Panc1 (cell line): ENCODE measurements at regions of chr4 and their contacts with region 1.

Region 1: GRCh38 chr4:153573881-153574802 is 108.0 kb downstream of the TMEM131L start:
- DNase-seq: peak; percentile 25
- ATAC-seq: peak; percentile 88
- H3K4me3 ChIP-seq: no peak overlapping the region
- H3K27ac ChIP-seq: no peak overlapping the region
- H3K4me1 ChIP-seq: no peaks in the 10 kb centered on the region
- H3K27me3 ChIP-seq: no peaks in the 10 kb centered on the region
- CTCF ChIP-seq: peak; percentile 68

Region 2: DNA sequence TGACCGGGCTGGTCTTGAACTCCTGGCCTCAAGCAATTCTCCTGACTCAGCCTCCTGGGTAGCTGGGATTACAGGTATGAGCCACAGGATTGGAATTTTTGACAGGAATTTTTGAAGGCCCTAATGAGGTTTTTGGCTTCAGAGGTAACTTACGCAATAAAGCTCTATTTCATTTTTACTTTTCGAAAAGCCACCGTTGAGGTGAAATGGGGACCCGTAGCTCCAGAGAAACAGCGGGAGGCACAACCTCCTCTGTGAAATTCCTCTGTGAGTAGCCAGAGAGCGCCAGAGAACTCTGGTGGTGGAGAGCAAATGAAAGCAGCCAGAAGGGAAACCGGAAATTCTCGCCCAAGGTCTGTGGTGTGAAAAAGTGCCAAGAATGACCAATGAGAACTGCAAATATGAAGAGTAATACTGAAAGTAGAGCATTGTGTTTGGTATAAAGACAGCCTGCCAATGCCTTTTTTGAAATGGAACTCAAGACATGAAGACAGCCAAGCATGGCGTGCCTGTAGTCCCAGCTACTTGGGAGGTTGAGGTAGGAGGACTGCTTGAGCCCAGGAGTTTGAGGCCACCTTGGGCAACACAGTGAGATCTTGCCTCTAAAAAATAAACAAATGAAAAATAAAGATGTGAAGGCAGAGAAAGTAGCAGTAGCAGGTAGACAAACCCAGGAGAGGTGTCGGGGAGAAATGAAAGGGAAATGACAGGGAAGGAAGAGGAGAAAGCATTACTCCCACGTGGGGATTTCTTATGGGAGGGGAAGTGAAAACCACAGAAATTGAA is 141.0 kb before region 1 on chr4:
- CTCF ChIA-PET with region 1: no interaction called
- POLR2A ChIA-PET with region 1: no interaction called
- in situ Hi-C with region 1: no loop called
- intact Hi-C with region 1: loop called (anchors 5 kb)
- DNase-seq: peak; percentile 50
- ATAC-seq: 0 out of 2 replicates have a peak, but pooled peaks have one; percentile 48
- H3K4me3 ChIP-seq: no peak overlapping the region
- H3K27ac ChIP-seq: no peak overlapping the region
- H3K4me1 ChIP-seq: no peaks in the 10 kb centered on the region
- H3K27me3 ChIP-seq: no peaks in the 10 kb centered on the region
- CTCF ChIP-seq: peak; percentile 63

Region 3: GRCh38 chr4:153634738-153635353 is 60.7 kb after region 1 on chr4:
- CTCF ChIA-PET with region 1: no interaction called
- POLR2A ChIA-PET with region 1: no interaction called
- in situ Hi-C with region 1: no loop called
- intact Hi-C with region 1: no loop called
- DNase-seq: no peak
- ATAC-seq: no peak
- H3K4me3 ChIP-seq: no peak overlapping the region
- H3K27ac ChIP-seq: no peak overlapping the region
- H3K4me1 ChIP-seq: no peaks in the 10 kb centered on the region
- H3K27me3 ChIP-seq: no peaks in the 10 kb centered on the region
- CTCF ChIP-seq: peak; percentile 51